Left cardiac atrium (tissue), 4 donors: ENCODE measurements at regions of chr5 and their contacts with region 1.

Region 1: GRCh38 chr5:82641331-82642003 is 363.3 kb upstream of the RPS23 start:
- DNase-seq: peak; percentile 65
- ATAC-seq: peak; percentile 95 to 96

Region 2: GRCh38 chr5:82793808-82794419 is 152.4 kb after region 1 on chr5:
- intact Hi-C with region 1: loop called in 1 of 2 experiments (anchors 10 kb)
- DNase-seq: no peak
- ATAC-seq: no peak

Region 3: DNA sequence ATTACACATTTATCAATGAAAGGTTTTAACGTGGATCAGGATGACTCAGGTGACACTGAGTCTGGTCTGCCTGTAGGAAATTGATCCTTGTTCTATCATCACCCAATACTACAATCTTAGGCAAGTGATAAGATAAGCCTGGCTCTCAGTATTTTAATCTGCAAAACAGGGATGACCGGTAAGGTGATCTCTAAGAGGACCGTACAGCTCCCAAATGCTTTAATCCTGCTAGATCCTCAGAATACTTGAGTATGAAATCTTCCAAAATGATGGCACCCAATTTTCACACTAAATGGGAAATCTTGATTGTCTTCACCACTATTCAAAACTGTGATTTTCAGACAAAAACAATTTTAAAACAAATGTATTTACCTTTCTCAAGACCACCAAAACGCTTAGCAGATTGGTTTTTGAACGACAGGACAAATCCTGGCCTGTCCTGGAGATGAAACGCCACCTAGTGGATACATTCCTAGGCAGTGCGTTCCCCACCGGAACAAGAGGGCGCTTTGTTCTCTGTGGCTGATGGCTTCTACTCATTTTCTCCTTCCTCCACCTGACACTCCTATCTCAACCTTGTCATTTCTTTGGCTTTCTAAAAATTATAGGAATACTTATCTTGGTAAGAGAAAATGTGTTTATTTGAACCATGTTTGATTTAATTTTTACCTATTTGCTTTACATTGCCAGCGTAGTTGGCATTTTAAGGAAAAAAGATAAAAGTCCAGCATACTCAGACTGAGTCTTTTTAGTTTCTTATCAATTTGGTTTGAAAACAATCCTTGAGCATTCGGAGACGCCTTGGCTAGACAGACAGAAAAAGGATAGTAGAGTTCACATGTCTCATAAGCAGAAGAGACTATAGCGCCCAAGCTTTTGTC is 788.9 kb after region 1 on chr5:
- intact Hi-C with region 1: loop called in 1 of 2 experiments (anchors 10 kb)
- DNase-seq: peak; percentile 68
- ATAC-seq: peak; percentile 79 to 88